Heart left ventricle (tissue), 16 donors: ENCODE measurements at regions of chr6 and their contacts with region 1.

Region 1: GRCh38 chr6:32933636-32934085 is 7.2 kb downstream of the HLA-DMB start:
- DNase-seq: peak; percentile 74 to 85 (median 77)
- ATAC-seq: peak in 3 of 4 donors; percentile 57 to 73 (median 71)
- H3K4me3 ChIP-seq: no peak overlapping the region
- H3K27ac ChIP-seq: peak overlapping the region in 1 of 12 donors; percentile 43
- H3K4me1 ChIP-seq: peaks cover 0 to 66% (median 0%) of the 10 kb centered on the region in 12 donors
- H3K27me3 ChIP-seq: no peaks in the 10 kb centered on the region
- CTCF ChIP-seq: peak; percentile 67 to 90 (median 81)
- POLR2A ChIP-seq: no peak

Region 2: DNA sequence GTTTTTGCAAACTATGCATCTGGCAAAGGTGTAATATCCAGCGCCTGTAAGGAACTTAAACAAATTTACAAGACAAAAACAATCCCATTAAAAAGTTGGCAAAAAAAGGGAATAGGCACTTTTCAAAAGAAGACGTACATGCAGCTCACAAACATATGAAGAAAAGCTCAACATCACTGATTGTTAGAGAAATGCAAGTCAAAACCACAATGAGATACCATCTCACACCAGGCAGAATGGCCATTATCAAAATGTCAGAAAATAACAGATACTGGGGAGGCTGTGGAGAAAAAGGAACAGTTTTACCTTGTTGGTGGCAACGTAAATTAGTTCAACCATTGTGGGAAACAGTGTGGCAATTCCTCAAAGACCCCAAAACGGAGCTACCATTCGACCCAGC is 616.1 kb before region 1 on chr6:
- intact Hi-C with region 1: no loop called
- DNase-seq: no peak
- ATAC-seq: no peak
- H3K4me3 ChIP-seq: no peak overlapping the region
- H3K27ac ChIP-seq: no peak overlapping the region
- H3K4me1 ChIP-seq: no peaks in the 10 kb centered on the region
- H3K27me3 ChIP-seq: no peaks in the 10 kb centered on the region
- CTCF ChIP-seq: no peak
- POLR2A ChIP-seq: no peak

Region 3: DNA sequence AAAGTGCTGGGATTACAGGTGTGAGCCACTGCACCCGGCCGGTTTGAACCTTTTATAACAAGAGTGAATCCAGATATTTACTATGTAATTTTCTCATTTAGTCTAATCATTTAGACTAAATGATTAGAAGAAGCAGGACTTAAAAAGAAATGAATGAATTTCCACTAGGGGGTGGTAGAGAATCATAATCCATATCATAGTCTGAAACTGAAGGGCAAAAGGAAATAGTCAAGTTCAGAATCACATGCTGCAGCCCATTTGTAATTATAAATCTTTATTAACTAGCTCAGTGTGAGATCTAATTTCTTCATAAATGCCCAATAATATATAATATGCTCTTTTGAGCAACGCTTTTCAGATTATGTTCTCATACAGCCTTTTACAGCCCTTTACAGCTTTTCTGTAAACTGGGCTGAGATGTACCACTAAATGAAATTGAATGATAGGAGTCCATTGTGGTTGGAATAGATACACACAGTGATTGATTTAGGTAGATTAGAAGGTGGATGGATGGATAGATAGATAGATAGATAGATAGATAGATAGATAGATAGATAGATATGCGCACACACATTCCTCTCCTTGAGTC is 47.9 kb before region 1 on chr6:
- intact Hi-C with region 1: loop called in 9 of 10 experiments (anchors 5 kb)
- DNase-seq: no peak
- ATAC-seq: peak; percentile 44 to 63 (median 52)
- H3K4me3 ChIP-seq: no peak overlapping the region
- H3K27ac ChIP-seq: peak overlapping the region in 1 of 12 donors; percentile 60
- H3K4me1 ChIP-seq: peaks cover 0 to 23% (median 0%) of the 10 kb centered on the region in 12 donors
- H3K27me3 ChIP-seq: no peaks in the 10 kb centered on the region
- CTCF ChIP-seq: peak; percentile 53 to 79 (median 68)
- POLR2A ChIP-seq: no peak

Region 4: DNA sequence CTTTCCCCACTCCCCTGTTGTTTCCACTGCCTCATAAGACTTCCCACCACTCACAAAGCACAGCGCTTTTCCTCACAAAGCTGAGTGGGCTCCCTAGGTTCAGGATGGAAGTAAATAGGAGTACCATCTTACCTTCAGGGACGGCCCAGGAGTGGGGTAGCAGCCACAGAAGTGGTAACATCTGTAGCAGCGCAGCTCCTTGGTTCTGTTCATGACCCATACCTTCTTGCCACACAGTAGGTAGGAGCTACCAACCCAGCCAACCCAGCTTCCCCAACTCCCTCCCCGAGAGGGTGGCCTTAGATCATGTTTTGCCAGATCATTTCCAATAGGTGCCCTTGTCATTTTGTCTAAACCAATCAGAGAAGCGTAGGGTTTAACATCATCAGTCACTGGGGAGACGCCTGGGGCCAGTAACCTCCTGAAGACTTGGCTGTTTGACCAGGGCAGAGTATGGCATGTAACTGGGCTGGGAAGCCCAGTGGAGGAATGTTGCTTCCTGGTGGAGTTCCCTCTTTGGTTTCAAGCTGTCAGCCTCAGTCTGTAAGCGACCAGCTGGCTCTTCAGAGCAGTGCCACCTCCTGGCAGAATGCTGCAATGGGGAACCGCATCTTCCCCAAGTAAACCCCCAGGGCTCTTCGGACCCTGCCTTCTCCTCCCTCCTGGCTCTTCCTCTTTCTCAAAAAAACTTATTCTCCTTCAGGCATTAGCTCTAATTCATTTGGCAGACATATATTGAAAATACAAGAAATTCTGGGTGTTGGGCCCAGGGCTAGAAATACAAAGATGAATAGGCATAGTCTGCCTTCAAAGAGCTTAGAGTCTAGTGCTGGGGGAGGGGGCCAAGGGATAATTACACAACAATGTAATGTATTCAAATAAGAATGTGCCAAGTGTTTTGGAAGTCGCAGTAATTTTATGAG is 19.4 kb after region 1 on chr6 and contains the start of gene HLA-DMA:
- intact Hi-C with region 1: loop called in 1 of 10 experiments (anchors 2 kb)
- DNase-seq: peak; percentile 82 to 89 (median 87)
- ATAC-seq: peak; percentile 99 to 100 (median 100)
- H3K4me3 ChIP-seq: peak within 1 kb of the TSS; percentile 11 to 63 (median 43)
- H3K27ac ChIP-seq: peak within 1 kb of the TSS; percentile 34 to 94 (median 78)
- H3K4me1 ChIP-seq: peaks cover 0 to 71% (median 5%) of the 10 kb centered on the region in 12 donors
- H3K27me3 ChIP-seq: no peaks in the 10 kb centered on the region
- CTCF ChIP-seq: peak; percentile 65 to 93 (median 81)
- POLR2A ChIP-seq: peak in 1 of 2 donors; percentile 73
- total RNA-seq, gene HLA-DMA: 5.4 to 150 (median 16.2) TPM

Region 5: DNA sequence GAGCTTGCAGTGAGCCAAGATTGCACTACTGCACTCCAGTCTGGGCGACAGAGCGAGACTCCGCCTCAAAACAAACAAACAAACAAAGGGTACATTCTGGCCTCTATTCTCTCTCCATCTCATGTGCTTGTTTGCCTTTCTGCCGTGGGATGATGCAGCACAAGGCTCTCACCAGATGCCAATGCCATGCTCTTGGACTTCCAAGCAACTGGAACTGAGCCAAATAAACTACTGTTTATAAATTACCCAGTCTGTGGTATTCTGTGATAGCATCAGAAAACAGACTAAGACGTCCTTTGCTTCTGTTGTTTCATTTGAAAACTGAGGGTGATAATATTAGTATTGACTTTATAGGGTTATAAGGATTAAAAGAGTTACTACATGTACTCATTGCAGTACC is 31.1 kb after region 1 on chr6:
- intact Hi-C with region 1: loop called in 2 of 10 experiments (anchors 1 to 5 kb)
- DNase-seq: no peak
- ATAC-seq: no peak
- H3K4me3 ChIP-seq: no peak overlapping the region
- H3K27ac ChIP-seq: peak overlapping the region in 1 of 12 donors; percentile 99
- H3K4me1 ChIP-seq: peaks cover 0 to 60% (median 16%) of the 10 kb centered on the region in 12 donors
- H3K27me3 ChIP-seq: no peaks in the 10 kb centered on the region
- CTCF ChIP-seq: no peak
- POLR2A ChIP-seq: no peak

Region 6: DNA sequence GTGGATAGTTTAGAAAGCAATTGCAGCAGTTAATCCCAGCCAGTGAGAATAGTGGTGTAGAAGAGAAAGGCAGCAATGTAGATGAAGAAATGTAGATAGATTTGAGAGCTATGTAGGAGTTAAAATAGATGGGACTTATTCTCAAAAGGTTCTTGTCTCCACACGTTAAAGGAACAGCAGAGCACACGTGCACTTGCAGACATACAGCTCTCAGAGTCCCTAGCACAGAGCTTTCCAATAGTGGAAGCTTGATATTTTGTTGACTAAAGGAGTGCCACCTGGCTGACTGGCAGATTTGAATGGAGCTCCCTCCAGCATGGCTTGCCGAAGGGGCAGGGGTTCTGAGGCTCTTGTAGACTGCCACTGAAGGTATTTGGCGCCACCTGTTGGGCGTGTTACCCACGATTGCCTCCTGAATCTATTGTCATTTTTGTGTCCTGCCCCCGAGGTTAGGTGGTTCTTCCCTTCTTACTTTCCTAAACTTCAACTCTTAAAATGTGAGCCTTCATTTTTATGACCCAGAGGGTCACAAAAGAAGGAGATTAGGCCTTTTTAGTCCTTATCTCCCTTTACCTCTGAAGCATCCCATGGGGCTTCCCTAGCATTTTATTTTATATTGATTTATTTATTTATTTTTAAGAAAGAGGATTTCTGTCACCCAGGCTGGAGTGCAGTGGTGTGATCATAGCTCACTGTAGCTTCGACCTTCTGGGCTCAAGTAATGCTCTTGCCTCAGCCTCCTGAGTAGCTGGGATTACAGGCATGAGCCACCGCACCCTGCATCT is 51.1 kb after region 1 on chr6:
- intact Hi-C with region 1: loop called (anchors 1 to 2 kb)
- DNase-seq: peak; percentile 84 to 93 (median 88)
- ATAC-seq: peak; percentile 75 to 86 (median 81)
- H3K4me3 ChIP-seq: no peak overlapping the region
- H3K27ac ChIP-seq: peak overlapping the region in 1 of 12 donors; percentile 9
- H3K4me1 ChIP-seq: peaks cover 0 to 18% (median 7%) of the 10 kb centered on the region in 12 donors
- H3K27me3 ChIP-seq: no peaks in the 10 kb centered on the region
- CTCF ChIP-seq: peak; percentile 72 to 98 (median 90)
- POLR2A ChIP-seq: no peak

Region 7: GRCh38 chr6:33271458-33272274 is 338.0 kb after region 1 on chr6 and contains the starts of genes RPS18 and VPS52:
- intact Hi-C with region 1: no loop called
- DNase-seq: peak; percentile 90 to 96 (median 95)
- ATAC-seq: peak; percentile 96 to 98 (median 98)
- H3K4me3 ChIP-seq: peak within 1 kb of the TSS; percentile 68 to 92 (median 76)
- H3K27ac ChIP-seq: peak within 1 kb of the TSS; percentile 86 to 98 (median 93)
- H3K4me1 ChIP-seq: peaks cover 15 to 60% (median 49%) of the 10 kb centered on the region in 12 donors
- H3K27me3 ChIP-seq: no peaks in the 10 kb centered on the region
- CTCF ChIP-seq: peak in 1 of 12 donors; percentile 9
- POLR2A ChIP-seq: peak; percentile 18 to 94
- total RNA-seq, gene RPS18: 685 to 1,292 (median 971) TPM
- total RNA-seq, gene VPS52: 26.4 to 47.0 (median 34.2) TPM